ENCODE measurements at regions of chr19 and their contacts with region 1.

Region 1: GRCh38 chr19:17829855-17830566 is 8.7 kb upstream of the INSL3 start:
- DNase-seq: peak; percentile 46
- ATAC-seq: peak; percentile 77
- H3K4me3 ChIP-seq: peak overlapping the region; percentile 57 to 83
- H3K27ac ChIP-seq: 0 out of 2 replicates have a peak overlapping the region, but pooled peaks have one; percentile 17
- H3K4me1 ChIP-seq: no peaks in the 10 kb centered on the region
- H3K27me3 ChIP-seq: no peaks in the 10 kb centered on the region
- CTCF ChIP-seq: no peak

Region 2: GRCh38 chr19:17409990-17410389 is 420.0 kb before region 1 on chr19:
- CTCF ChIA-PET with region 1: interaction called, 11 read pairs
- POLR2A ChIA-PET with region 1: no interaction called
- in situ Hi-C with region 1: no loop called
- intact Hi-C with region 1: no loop called
- DNase-seq: no peak
- ATAC-seq: no peak
- H3K4me3 ChIP-seq: no peak overlapping the region
- H3K27ac ChIP-seq: no peak overlapping the region
- H3K4me1 ChIP-seq: peaks cover 12% of the 10 kb centered on the region; the same call in 1 of the 2 replicates
- H3K27me3 ChIP-seq: no peaks in the 10 kb centered on the region
- CTCF ChIP-seq: no peak